ENCODE measurements at regions of chr7 and their contacts with region 1.

Region 1: GRCh38 chr7:15686295-15686956 is at the start of gene MEOX2:
- DNase-seq: no peak
- H3K4me3 ChIP-seq: peak within 1 kb of the TSS; percentile 51 to 52
- H3K27ac ChIP-seq: peak within 1 kb of the TSS; percentile 85
- H3K4me1 ChIP-seq: peaks cover 22% of the 10 kb centered on the region
- H3K27me3 ChIP-seq: peaks cover 5% of the 10 kb centered on the region
- CTCF ChIP-seq: no peak
- POLR2A ChIP-seq: no peak
- total RNA-seq, gene MEOX2: 1.7 TPM

Region 2: GRCh38 chr7:15709978-15710377 is 23.6 kb after region 1 on chr7:
- intact Hi-C with region 1: no loop called
- DNase-seq: no peak
- H3K4me3 ChIP-seq: no peak overlapping the region
- H3K27ac ChIP-seq: no peak overlapping the region
- H3K4me1 ChIP-seq: no peaks in the 10 kb centered on the region
- H3K27me3 ChIP-seq: no peaks in the 10 kb centered on the region
- CTCF ChIP-seq: no peak
- POLR2A ChIP-seq: no peak

Region 3: GRCh38 chr7:15764851-15765382 is 78.5 kb after region 1 on chr7:
- intact Hi-C with region 1: loop called (anchors 5 kb)
- DNase-seq: no peak
- H3K4me3 ChIP-seq: no peak overlapping the region
- H3K27ac ChIP-seq: no peak overlapping the region
- H3K4me1 ChIP-seq: no peaks in the 10 kb centered on the region
- H3K27me3 ChIP-seq: no peaks in the 10 kb centered on the region
- CTCF ChIP-seq: no peak
- POLR2A ChIP-seq: no peak